GM12878 (cell line): ENCODE measurements at regions of chr1 and their contacts with region 1.

Region 1: DNA sequence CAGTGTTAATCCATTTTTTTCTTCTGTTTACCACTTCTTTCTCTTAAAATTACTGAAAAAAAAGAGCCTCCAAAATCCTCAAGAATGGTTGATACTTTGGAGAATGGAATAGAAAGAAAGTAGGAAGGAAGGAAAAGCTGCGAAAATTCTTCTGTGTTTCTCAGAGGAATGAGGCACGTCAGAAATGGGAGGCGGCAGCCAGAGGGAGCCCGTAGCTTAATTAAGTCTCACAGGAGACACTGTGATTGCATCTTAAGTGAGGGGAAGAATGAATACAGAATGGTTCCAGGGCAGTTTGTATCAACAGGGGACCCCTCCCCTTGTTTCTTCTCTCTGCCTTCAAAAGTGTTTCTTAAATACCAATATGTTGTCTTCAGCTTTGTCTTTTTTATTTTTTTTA is 1099.5 kb downstream of the PLA2G4A start:
- DNase-seq: no peak
- ATAC-seq: peak; percentile 92
- H3K4me3 ChIP-seq: no peak overlapping the region
- H3K27ac ChIP-seq: no peak overlapping the region
- H3K4me1 ChIP-seq: no peaks in the 10 kb centered on the region
- H3K27me3 ChIP-seq: no peaks in the 10 kb centered on the region
- CTCF ChIP-seq: peak; percentile 38 to 81 (median 40); a peak in 4 of 6 replicates
- EP300 ChIP-seq: no peak
- POLR2A ChIP-seq: no peak
- RAD21 ChIP-seq: peak; percentile 90

Region 2: DNA sequence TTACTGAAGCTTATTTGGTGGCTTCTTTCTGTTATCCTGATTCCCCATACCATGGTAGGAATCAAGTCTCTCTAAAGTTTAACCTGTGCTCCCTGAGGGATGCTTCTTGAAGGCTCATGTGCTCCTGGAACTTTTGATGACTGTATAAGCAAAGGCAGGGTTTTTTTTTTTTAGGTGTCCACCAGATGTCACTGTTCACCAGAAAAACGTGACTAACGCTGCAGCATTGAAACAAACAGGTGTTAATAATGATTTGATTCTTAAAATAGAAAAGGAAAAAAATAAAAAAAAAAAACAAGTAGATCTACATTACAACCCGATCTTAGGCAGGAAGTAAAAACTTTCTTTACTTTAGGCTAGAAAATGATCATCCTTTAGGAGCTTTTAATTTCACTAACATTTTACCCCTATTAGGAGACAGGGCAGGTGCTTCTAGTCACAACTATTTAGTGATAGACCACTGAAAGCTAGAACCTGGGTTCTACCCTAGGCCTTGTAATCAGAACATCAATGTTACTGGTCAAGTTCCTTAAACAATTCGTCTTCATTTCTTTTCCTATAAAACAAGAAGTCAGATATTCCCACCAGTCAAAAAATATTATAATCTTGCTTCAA is 876.6 kb before region 1 on chr1:
- CTCF ChIA-PET with region 1: interaction called, 4 read pairs
- POLR2A ChIA-PET with region 1: no interaction called
- RAD21 ChIA-PET with region 1: no interaction called
- SMC1A ChIA-PET with region 1: interaction called, 4 read pairs
- in situ Hi-C with region 1: no loop called
- intact Hi-C with region 1: loop called (anchors 5 kb)
- DNase-seq: peak; percentile 19
- ATAC-seq: peak; percentile 86
- H3K4me3 ChIP-seq: no peak overlapping the region
- H3K27ac ChIP-seq: no peak overlapping the region
- H3K4me1 ChIP-seq: no peaks in the 10 kb centered on the region
- H3K27me3 ChIP-seq: no peaks in the 10 kb centered on the region; a peak in 1 of 4 replicates
- CTCF ChIP-seq: peak; percentile 22 to 60 (median 58); a peak in 5 of 6 replicates
- EP300 ChIP-seq: no peak
- POLR2A ChIP-seq: no peak
- RAD21 ChIP-seq: peak; percentile 82

Region 3: GRCh38 chr1:187787736-187788135 is 140.6 kb before region 1 on chr1:
- CTCF ChIA-PET with region 1: no interaction called
- POLR2A ChIA-PET with region 1: no interaction called
- RAD21 ChIA-PET with region 1: no interaction called
- SMC1A ChIA-PET with region 1: no interaction called
- in situ Hi-C with region 1: no loop called
- intact Hi-C with region 1: no loop called
- DNase-seq: no peak
- ATAC-seq: no peak
- H3K4me3 ChIP-seq: no peak overlapping the region
- H3K27ac ChIP-seq: no peak overlapping the region
- H3K4me1 ChIP-seq: no peaks in the 10 kb centered on the region
- H3K27me3 ChIP-seq: no peaks in the 10 kb centered on the region
- CTCF ChIP-seq: no peak
- EP300 ChIP-seq: no peak
- POLR2A ChIP-seq: no peak
- RAD21 ChIP-seq: no peak

Region 4: GRCh38 chr1:187871177-187871845 is 57.0 kb before region 1 on chr1:
- CTCF ChIA-PET with region 1: no interaction called
- POLR2A ChIA-PET with region 1: no interaction called
- RAD21 ChIA-PET with region 1: no interaction called
- SMC1A ChIA-PET with region 1: no interaction called
- in situ Hi-C with region 1: no loop called
- intact Hi-C with region 1: no loop called
- DNase-seq: no peak
- ATAC-seq: no peak
- H3K4me3 ChIP-seq: no peak overlapping the region
- H3K27ac ChIP-seq: no peak overlapping the region
- H3K4me1 ChIP-seq: no peaks in the 10 kb centered on the region
- H3K27me3 ChIP-seq: no peaks in the 10 kb centered on the region
- CTCF ChIP-seq: no peak
- EP300 ChIP-seq: no peak
- POLR2A ChIP-seq: no peak
- RAD21 ChIP-seq: no peak

Region 5: DNA sequence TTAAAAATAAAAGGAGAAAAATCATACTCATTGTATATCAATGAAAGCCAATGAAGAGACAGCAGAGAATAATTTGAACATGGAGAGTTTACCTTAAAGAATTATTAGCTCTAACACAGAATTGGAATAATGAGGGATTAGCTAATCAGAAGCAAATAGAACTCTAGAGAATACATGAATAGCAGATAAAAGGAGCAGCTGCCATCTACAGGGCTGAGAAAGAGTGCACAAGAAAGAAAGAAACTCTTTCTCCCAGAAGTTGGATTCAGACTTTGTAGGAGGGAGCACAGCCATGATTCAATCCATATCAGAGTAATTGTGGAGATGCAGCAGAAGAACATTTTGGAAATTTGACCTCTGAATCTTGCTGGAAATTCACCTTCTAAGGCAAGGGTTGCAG is 71.7 kb after region 1 on chr1:
- CTCF ChIA-PET with region 1: interaction called, 14 read pairs
- POLR2A ChIA-PET with region 1: no interaction called
- RAD21 ChIA-PET with region 1: interaction called, 8 read pairs
- SMC1A ChIA-PET with region 1: interaction called, 16 read pairs
- in situ Hi-C with region 1: no loop called
- intact Hi-C with region 1: no loop called
- DNase-seq: no peak
- ATAC-seq: peak; percentile 39; the same call in 2 of the 3 replicates
- H3K4me3 ChIP-seq: no peak overlapping the region
- H3K27ac ChIP-seq: no peak overlapping the region
- H3K4me1 ChIP-seq: no peaks in the 10 kb centered on the region; the same call in 1 of the 2 replicates
- H3K27me3 ChIP-seq: no peaks in the 10 kb centered on the region
- CTCF ChIP-seq: peak in 1 of 3 experiments; percentile 15; a peak in 1 of 6 replicates
- EP300 ChIP-seq: no peak
- POLR2A ChIP-seq: no peak
- RAD21 ChIP-seq: peak; percentile 36

Region 6: DNA sequence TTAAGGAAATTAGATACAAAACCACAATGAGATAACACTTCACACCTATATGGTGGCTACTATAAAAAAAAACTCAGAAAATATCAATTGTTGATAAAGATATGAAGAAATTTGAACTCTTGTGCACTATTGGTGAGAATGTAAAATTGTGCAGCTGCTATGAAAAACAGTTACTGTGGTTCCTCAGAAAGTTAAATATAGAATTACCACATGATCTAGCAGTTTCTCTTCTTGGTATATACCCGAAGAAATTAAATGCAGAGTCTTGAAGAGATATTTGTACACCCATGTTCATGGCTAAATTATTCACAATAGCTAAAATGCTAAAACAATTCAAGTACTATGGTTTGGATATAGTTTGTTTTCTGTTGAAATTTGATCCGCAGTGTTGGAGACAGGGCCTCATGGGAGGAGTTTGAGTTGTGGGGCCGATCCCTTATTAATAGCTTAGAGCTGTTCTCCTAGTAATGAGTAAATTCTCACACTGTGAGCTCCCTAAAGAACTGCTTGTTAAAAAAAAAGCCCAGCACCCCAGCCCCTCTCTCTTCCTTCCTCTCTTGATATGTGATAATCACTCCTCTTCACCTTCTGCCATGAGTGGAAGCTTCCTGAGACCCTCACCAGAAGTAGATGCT is 312.6 kb after region 1 on chr1:
- CTCF ChIA-PET with region 1: interaction called, 32 read pairs
- POLR2A ChIA-PET with region 1: no interaction called
- RAD21 ChIA-PET with region 1: interaction called, 5 read pairs
- SMC1A ChIA-PET with region 1: interaction called, 13 read pairs
- in situ Hi-C with region 1: no loop called
- intact Hi-C with region 1: loop called (anchors 5 kb)
- DNase-seq: no peak
- ATAC-seq: peak; percentile 72
- H3K4me3 ChIP-seq: no peak overlapping the region
- H3K27ac ChIP-seq: no peak overlapping the region
- H3K4me1 ChIP-seq: no peaks in the 10 kb centered on the region
- H3K27me3 ChIP-seq: no peaks in the 10 kb centered on the region
- CTCF ChIP-seq: no peak
- EP300 ChIP-seq: no peak
- POLR2A ChIP-seq: no peak
- RAD21 ChIP-seq: no peak

Region 7: DNA sequence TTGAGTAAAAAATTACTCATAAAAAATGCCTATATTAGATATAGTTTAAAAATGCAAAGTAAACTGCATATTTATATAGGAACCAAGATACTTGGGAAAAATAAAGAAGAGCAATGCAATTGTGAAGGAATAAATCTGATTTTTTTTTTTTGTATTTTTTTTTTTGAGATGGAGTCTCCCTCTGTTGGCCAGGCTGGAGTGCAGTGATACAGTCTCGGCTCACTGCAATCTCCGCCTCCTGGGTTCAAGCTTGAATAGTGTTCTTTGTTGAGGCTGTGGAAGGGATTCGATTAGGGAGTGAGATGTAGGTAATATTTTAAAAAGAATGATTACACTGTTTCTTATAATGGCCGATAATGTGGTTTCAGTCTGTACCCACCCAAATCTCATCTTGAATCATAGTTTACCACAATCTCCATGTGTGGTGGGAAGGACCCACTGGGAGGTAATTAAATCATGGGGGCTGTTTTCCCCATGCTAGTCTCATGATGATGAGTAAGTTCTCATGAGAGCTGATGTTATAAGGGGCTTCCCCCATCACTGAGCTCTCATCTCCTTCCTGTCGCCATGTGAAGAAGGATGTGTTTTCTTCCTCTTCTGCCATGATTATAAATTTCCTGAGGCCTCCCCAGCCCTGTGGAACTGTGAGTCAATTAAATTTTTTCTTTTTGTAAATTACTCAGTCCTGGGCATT is 666.4 kb after region 1 on chr1:
- CTCF ChIA-PET with region 1: interaction called, 10 read pairs
- POLR2A ChIA-PET with region 1: no interaction called
- RAD21 ChIA-PET with region 1: no interaction called
- SMC1A ChIA-PET with region 1: no interaction called
- in situ Hi-C with region 1: no loop called
- intact Hi-C with region 1: no loop called
- DNase-seq: no peak
- ATAC-seq: no peak
- H3K4me3 ChIP-seq: no peak overlapping the region
- H3K27ac ChIP-seq: no peak overlapping the region
- H3K4me1 ChIP-seq: no peaks in the 10 kb centered on the region
- H3K27me3 ChIP-seq: no peaks in the 10 kb centered on the region
- CTCF ChIP-seq: no peak
- EP300 ChIP-seq: no peak
- POLR2A ChIP-seq: no peak
- RAD21 ChIP-seq: no peak